Stomach (tissue), 19 donors: ENCODE measurements at regions of chr4 and their contacts with region 1.

Region 1: DNA sequence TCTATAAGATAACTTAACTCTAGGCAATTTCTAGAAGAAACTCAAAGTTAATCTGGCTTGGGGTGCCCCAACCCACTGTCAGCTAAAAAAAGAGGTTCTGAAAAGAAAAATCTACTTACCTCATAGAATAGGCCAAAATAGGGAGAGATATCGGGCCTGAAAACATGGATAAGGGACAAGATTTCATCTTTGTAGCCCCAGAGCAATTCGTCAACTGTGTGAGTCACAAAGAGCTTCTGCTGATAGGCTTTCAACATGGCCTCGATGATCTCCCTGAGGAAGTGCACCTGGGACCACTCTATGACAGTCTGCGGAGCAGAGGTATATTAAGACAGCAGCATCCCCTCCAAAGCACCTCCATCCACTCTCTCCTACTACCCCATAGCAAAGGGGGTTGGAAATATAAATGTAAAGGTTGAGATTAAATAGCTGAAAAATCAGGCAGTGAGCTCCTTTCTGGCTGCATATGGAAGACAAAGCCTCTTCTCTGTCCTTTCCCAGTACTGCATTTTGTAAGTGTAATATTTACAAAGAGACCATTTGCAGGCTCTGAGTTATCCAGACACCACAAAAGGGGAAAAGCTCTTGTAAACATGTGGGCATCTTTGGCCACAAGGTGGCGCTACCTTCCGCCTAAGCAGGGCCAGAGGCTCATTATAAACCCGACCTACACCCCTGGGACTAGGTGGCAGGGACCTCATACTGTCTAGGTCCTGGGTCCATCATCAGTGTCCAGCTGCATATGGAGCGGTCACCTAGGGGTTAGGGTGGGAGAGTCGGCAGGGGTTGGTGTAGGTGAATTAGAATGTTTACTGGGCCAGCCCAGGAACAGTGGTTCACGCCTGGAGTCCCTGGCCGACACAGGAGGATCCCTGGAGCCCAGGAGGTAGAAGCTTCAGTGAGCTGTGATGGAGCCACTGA is 31.5 kb upstream of the NUP54 start:
- DNase-seq: peak; percentile 93 to 94
- H3K4me3 ChIP-seq: no peak overlapping the region
- H3K27ac ChIP-seq: peak overlapping the region in 2 of 5 donors; percentile 30 to 37
- H3K4me1 ChIP-seq: peaks cover 4 to 35% (median 20%) of the 10 kb centered on the region in 4 donors
- H3K27me3 ChIP-seq: no peaks in the 10 kb centered on the region
- CTCF ChIP-seq: peak in 5 of 7 experiments; percentile 62 to 98 (median 89)
- EP300 ChIP-seq: no peak
- POLR2A ChIP-seq: no peak

Region 2: DNA sequence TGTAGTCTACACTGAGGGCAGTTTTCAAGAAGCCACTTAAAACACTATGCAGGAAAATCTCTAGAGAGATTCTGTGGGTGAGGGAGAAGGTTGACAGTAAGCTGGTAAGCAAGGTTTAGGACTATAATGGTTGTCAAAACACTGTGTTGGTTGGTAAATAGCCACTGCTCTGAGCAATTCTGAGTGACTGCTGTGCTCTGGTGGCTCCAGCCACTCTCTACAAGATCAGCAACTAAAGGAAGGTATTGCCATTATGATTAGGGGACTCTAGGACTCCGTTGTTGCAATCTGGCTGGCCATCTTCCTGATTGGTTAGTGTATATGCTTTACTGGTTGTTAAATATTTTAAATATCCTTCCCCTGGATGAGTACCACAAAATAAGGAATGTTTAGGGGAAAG is 66.4 kb after region 1 on chr4:
- intact Hi-C with region 1: loop called (anchors 10 kb)
- DNase-seq: no peak
- H3K4me3 ChIP-seq: no peak overlapping the region
- H3K27ac ChIP-seq: no peak overlapping the region
- H3K4me1 ChIP-seq: peaks cover 4 to 10% (median 6%) of the 10 kb centered on the region in 4 donors
- H3K27me3 ChIP-seq: no peaks in the 10 kb centered on the region
- CTCF ChIP-seq: no peak
- EP300 ChIP-seq: no peak
- POLR2A ChIP-seq: no peak

Region 3: DNA sequence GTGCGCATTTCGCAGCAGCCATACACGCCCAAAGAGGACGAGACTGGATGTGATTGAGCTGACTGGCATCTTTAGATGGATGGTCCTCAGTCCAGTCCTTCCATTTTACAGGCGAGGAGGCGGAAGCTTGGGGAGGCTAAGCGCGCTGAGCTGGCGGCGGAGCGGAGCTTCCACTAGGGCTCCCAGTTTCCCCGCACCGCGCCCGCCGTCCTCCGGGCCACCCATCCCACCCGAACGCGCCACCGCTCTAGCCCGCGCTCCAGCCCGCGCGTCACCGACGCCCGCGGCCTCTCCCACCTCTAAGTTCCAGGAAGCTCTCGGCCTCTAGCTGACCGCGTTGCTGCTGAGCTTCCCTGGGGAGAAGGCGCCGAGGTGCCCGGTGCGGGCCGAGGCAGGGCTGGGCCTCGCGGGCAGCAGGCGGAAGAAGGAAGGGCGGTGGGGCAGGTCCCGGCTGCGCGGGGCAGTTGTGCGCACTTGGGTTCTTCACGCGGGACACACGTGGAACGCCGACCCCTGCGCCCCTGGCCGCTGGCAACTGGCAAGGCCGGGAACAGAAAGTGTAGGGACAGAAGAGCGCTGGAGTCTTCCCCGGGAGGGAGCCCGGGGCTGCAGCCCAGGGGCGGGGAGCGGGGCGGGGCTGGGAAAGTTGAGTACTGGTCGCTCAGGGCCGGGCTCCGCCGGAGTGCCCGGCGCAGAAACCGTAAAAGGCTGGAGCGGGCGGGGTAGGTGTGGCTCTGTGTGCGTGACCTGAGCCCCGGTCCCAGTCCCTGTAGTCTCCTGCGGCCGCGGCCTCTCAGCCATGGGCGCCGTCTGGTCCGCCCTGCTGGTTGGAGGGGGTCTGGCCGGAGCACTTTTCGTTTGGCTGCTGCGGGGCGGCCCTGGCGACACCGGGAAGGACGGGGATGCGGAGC is 126.6 kb after region 1 on chr4 and contains the start of gene STBD1:
- intact Hi-C with region 1: loop called (anchors 10 kb)
- DNase-seq: peak; percentile 77 to 91
- H3K4me3 ChIP-seq: peak within 1 kb of the TSS; percentile 73 to 89 (median 82)
- H3K27ac ChIP-seq: peak within 1 kb of the TSS; percentile 85 to 92 (median 89)
- H3K4me1 ChIP-seq: peaks cover 24 to 67% (median 34%) of the 10 kb centered on the region in 4 donors
- H3K27me3 ChIP-seq: no peaks in the 10 kb centered on the region
- CTCF ChIP-seq: no peak
- EP300 ChIP-seq: no peak
- POLR2A ChIP-seq: no peak
- total RNA-seq, gene STBD1: 0.89 to 29.3 (median 7.3) TPM in 4 of 5 donors, not detected in the other

Region 4: GRCh38 chr4:76499461-76499860 is 319.8 kb after region 1 on chr4:
- intact Hi-C with region 1: loop called (anchors 10 kb)
- DNase-seq: no peak
- H3K4me3 ChIP-seq: no peak overlapping the region
- H3K27ac ChIP-seq: no peak overlapping the region
- H3K4me1 ChIP-seq: peaks cover 0 to 19% (median 7%) of the 10 kb centered on the region in 4 donors
- H3K27me3 ChIP-seq: peaks cover 0 to 8% (median 0%) of the 10 kb centered on the region in 3 donors
- CTCF ChIP-seq: no peak
- EP300 ChIP-seq: no peak
- POLR2A ChIP-seq: no peak